Prostate gland (tissue), 2 donors: ENCODE measurements at regions of chr12 and their contacts with region 1.

Region 1: DNA sequence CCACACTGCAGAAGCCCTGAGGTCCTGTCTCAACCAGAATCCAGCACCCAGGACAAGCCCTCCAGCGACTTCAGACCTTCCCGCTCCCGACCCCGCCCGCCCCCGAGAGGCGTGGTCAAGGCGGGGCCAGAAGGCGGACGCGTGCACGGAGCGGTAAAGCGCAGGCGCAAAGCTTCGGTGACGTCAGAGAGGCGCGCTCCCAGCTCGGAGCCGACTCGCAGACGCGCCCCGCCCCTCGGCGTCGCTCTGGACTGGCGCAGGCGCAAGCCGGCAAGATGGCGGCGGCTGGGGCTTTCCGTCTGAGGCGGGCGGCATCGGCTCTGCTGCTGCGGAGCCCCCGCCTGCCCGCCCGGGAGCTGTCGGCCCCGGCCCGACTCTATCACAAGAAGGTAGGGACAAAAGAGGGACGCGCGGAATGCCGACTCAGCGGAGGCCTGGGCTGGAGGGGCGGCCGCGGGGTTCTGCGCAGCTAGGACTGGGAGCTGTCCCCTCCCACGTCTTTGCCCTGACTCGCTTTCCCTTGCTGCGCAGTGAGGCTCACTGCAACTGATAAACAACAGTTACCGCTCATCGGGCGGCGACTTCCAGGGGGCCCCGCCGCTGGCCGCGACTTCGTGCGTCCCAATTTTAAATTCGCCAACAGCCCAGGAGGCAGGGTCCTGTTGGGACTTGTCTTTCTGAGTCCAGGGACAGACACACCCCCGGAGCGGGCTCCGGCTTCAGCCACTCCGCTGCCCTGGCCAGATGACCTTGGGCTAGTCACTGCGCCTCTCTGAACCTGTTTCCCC is at the start of gene ISCU:
- DNase-seq: peak; percentile 95
- H3K4me3 ChIP-seq: peak within 1 kb of the TSS; percentile 89 to 97
- H3K27ac ChIP-seq: peak within 1 kb of the TSS; percentile 88
- H3K4me1 ChIP-seq: no peaks in the 10 kb centered on the region
- H3K27me3 ChIP-seq: no peaks in the 10 kb centered on the region
- CTCF ChIP-seq: no peak
- POLR2A ChIP-seq: peak; percentile 93
- total RNA-seq, gene ISCU: 170 to 203 TPM

Region 2: GRCh38 chr12:108425333-108425732 is 137.2 kb before region 1 on chr12:
- intact Hi-C with region 1: no loop called
- DNase-seq: no peak
- H3K4me3 ChIP-seq: no peak overlapping the region
- H3K27ac ChIP-seq: no peak overlapping the region
- H3K4me1 ChIP-seq: no peaks in the 10 kb centered on the region
- H3K27me3 ChIP-seq: no peaks in the 10 kb centered on the region
- CTCF ChIP-seq: no peak
- POLR2A ChIP-seq: no peak

Region 3: DNA sequence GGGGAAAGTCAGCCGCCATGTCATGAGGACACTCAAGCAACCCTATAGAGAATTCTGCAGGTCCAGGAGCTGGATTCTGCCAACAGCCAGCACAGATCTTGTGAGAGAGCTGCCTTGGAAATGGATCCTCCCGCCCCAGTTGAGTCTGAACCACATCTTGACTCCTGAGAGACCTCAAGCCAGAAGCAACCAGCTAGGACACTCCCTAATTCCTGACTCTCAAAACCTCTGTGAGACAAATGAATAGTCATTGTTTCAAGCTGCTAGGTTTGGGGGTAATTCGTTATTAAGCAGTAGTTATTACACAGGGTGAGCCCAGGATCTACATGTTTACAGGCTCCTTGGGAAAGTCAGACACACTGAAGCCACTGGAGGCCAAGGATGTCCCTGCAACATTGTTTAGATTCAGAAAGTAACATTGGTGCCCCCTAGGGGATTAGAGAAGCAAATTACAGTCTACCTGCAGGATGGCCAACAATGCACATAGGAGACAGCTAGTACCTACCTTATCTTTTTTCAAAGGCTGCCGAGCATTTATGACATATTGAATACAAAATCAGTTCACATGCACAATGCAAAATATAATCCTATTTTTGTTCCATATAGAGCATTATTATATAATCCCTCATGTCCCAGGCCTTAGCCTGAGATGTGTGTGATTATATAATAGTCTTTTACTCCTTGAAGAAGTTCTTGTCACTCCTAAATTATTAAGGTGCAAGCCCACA is 105.4 kb before region 1 on chr12:
- intact Hi-C with region 1: no loop called
- DNase-seq: no peak
- H3K4me3 ChIP-seq: no peak overlapping the region
- H3K27ac ChIP-seq: no peak overlapping the region
- H3K4me1 ChIP-seq: no peaks in the 10 kb centered on the region
- H3K27me3 ChIP-seq: no peaks in the 10 kb centered on the region
- CTCF ChIP-seq: peak in 3 of 4 experiments; percentile 50 to 62 (median 59)
- POLR2A ChIP-seq: no peak

Region 4: DNA sequence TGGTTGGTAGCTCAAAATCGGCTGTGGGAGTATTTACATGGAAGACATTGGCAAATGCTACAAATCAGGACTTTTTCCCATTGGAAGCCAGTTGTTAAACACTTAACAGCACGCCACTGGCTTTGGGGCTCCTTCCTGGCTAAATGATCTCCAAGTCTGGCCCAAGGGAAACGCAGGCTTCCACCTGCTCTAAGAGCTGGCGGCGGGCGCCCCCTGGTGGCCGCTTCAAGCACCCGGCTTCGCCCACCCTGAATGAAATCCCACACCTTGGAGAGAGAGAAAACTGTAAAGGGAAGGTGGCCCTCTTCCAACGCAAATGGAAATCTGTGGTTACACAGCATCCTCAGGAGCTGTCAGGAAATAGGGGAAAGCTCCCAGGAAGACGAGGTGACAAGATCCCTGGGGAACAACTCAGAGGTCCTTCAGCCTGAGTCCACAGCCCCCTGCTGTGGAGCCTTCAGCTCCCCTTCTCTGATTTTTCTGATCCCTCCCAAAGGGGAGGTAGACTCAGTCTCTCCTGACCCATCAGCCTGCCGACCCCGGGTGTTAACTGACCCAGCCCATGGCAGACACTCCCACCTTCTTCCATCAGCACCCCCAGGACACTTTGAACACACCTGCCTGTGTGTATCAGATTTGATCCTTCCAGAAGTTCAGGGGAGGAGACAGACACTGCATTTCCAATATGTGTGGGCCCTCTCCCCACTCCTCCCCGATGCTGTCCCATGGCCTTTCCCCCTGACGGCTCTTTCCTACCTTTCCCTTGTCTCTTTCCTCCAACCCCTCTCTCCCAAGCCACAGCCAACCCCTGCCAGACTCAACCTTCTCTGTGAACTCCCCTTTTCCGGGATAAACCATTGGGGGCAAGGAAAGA is 55.8 kb after region 1 on chr12:
- intact Hi-C with region 1: loop called (anchors 2 kb)
- DNase-seq: peak; percentile 57
- H3K4me3 ChIP-seq: no peak overlapping the region
- H3K27ac ChIP-seq: no peak overlapping the region
- H3K4me1 ChIP-seq: no peaks in the 10 kb centered on the region
- H3K27me3 ChIP-seq: no peaks in the 10 kb centered on the region
- CTCF ChIP-seq: peak; percentile 90 to 97 (median 91)
- POLR2A ChIP-seq: no peak

Region 5: DNA sequence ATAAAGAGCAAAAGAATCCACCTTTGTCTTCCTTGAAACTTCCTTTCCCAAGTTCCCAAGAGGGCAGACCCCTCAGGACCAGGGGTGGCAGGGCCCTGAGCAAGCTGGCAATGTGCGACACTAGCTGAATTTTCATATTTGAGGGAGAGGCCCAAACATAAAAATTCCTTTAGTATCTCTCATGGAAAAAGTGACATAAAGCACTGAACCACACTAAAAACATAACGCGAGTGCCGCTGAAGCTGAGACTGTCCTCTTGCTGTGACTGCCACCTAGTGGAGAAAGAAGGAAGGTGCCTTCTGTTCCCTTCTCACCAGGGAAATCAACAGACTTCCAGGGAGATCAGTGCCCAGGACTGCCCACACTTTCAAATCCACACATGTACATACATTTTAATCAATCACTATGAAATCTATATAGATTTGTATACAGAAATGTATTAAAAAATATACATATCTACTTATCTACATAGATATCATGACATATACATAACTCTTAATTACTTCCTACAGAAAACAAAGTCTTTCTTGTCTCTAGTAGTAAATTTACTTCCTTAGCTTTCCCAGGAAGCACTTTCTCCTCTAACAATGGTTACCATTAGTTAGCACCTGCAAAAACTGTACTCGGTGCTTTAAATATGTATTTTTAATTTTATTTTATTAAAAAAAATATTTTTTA is 241.0 kb after region 1 on chr12:
- intact Hi-C with region 1: loop called (anchors 2 kb)
- DNase-seq: peak; percentile 84
- H3K4me3 ChIP-seq: no peak overlapping the region
- H3K27ac ChIP-seq: peak overlapping the region; percentile 67 to 71
- H3K4me1 ChIP-seq: no peaks in the 10 kb centered on the region
- H3K27me3 ChIP-seq: no peaks in the 10 kb centered on the region
- CTCF ChIP-seq: peak; percentile 85 to 96 (median 95)
- POLR2A ChIP-seq: no peak

Region 6: GRCh38 chr12:108856428-108857157 is 294.1 kb after region 1 on chr12:
- intact Hi-C with region 1: loop called (anchors 5 kb)
- DNase-seq: peak; percentile 59
- H3K4me3 ChIP-seq: peak overlapping the region; percentile 58 to 61
- H3K27ac ChIP-seq: peak overlapping the region; percentile 68 to 82
- H3K4me1 ChIP-seq: peaks cover 10% of the 10 kb centered on the region
- H3K27me3 ChIP-seq: no peaks in the 10 kb centered on the region
- CTCF ChIP-seq: no peak
- POLR2A ChIP-seq: peak; percentile 40

Region 7: GRCh38 chr12:109093022-109093918 is 530.7 kb after region 1 on chr12 and contains the start of gene ALKBH2:
- intact Hi-C with region 1: loop called (anchors 5 kb)
- DNase-seq: peak; percentile 89
- H3K4me3 ChIP-seq: peak within 1 kb of the TSS; percentile 43 to 46
- H3K27ac ChIP-seq: peak within 1 kb of the TSS in 1 of 2 donors; percentile 55
- H3K4me1 ChIP-seq: no peaks in the 10 kb centered on the region
- H3K27me3 ChIP-seq: no peaks in the 10 kb centered on the region
- CTCF ChIP-seq: peak; percentile 94 to 99 (median 98)
- POLR2A ChIP-seq: no peak
- total RNA-seq, gene ALKBH2: 16.6 to 26.2 TPM